ENCODE measurements at regions of chr10 and their contacts with region 1.

Region 1: DNA sequence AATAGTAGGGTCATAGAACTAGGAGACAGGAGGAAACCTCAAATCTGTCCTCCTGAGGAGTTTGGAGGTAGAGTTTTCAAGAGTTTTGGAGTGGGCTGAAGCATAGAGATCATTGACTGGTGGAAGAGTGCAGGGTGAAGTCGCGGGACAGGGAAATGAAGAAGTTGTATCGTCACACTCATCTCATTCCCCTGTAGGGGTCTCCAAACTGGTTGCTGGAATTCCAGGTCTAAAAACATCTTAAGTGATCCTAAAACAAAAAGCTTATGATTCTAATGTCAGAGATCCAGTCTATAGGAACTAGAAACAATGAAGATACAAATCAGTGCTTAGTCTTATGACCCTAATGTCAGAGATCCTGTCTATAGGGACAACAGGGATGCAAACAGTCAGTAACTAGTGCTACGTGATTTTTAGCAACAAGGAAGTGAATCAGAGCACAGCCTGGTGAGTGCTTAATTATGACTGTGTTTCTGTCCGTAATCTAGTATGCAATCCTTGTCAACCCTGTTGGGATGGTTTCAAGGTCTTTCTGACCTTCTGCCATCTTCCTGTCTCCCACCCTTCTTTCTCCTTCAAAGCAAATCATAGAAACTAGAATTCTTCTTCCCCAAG is 139.4 kb downstream of the SKIDA1 start:
- DNase-seq: no peak

Region 2: DNA sequence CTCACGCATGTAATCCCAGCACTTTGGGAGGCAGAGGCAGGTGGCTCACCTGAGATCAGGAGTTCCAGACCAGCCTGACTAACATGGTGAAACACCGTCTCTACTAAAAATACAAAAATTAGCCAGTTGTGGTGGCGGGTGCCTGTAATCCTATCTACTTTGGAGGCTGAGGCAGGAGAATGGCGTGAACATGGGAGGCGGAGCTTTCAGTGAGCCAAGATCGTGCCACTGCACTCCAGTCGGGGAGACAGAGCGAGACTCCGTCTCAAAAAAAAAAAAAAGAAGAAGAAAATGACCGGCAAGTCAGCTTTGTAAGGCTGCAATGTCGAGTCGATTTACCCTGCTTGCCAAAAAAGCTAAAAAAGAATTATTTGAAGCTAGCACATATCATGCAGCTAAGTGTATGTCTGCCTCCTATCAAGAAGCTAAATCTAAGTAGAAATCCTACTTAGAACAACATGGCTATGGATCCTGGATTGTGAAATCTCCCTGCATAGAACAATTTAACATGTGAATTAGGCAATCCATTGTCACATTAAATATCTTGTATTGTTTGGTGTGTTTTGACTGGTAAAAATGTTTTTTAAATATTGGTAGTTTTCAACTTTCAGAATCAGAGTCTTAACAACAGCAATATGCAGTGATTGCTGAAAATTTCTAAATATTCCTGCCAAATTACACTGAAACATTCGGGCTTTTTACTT is 65.9 kb after region 1 on chr10:
- intact Hi-C with region 1: loop called in 1 of 2 experiments (anchors 1 kb)
- DNase-seq: no peak